GM13977 (cell line): ENCODE measurements at regions of chr3 and their contacts with region 1.

Region 1: GRCh38 chr3:56799251-56799882 is 2.4 kb downstream of the ARHGEF3 start:
- DNase-seq: peak; percentile 60
- CTCF ChIP-seq: peak; percentile 58

Region 2: DNA sequence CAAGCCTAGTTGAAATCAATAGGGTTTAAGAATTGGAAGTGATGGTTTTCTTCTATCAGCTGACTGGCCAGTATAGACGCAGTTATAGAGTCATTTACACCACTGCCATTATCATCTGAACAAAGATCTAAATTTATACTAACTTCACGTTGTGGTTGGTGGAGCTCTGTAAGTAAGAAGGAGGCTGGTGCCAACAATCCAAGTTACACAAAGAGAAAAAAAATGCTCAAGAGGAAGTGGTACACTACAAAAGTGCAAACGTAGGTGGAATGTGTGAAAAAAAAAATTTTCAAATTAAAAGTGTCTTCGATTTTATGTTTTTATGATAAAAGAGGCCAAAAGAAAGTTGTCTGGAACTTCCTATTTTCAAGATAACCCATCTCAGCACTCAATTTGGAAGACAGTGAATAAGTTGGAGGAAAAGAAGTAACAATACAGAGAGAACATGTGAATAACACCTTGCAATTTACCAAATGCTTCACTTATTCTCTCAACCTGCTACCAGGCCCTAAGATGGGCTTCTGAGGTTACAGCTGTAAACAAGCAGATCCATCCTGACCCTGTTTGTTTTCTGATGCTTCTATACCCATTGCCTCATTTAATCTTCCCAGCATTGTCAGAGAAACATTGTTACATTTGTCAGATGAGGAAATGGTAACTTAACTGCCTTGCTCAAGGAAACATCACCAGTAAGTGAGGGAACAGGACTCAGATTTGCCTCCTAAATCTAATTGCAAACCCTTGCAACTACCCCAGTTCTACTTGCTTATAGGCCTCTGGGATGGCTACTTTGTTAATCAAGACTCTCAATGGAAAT is 104.3 kb before region 1 on chr3:
- in situ Hi-C with region 1: loop called (anchors 5 kb)
- DNase-seq: no peak
- CTCF ChIP-seq: no peak